SK-N-SH (cell line): ENCODE measurements at regions of chr2 and their contacts with region 1.

Region 1: GRCh38 chr2:237858294-237859081 is 935 bp upstream of the RAMP1 start:
- DNase-seq: peak; percentile 86
- H3K4me3 ChIP-seq: peak overlapping the region in 1 of 2 experiments; percentile 55; a peak in 1 of 4 replicates
- H3K27ac ChIP-seq: peak overlapping the region in 1 of 2 experiments; percentile 94; a peak in 2 of 4 replicates
- H3K4me1 ChIP-seq: peaks cover 0 to 38% of the 10 kb centered on the region in 2 experiments; a peak in 2 of 4 replicates
- H3K27me3 ChIP-seq: no peaks in the 10 kb centered on the region
- CTCF ChIP-seq: peak; percentile 81
- EP300 ChIP-seq: no peak
- RAD21 ChIP-seq: peak; percentile 99

Region 2: GRCh38 chr2:237704501-237705434 is 153.7 kb before region 1 on chr2:
- CTCF ChIA-PET with region 1: no interaction called
- POLR2A ChIA-PET with region 1: no interaction called
- DNase-seq: no peak
- H3K4me3 ChIP-seq: no peak overlapping the region
- H3K27ac ChIP-seq: peak overlapping the region; percentile 56 to 95
- H3K4me1 ChIP-seq: peaks cover 45 to 53% of the 10 kb centered on the region in 2 experiments
- H3K27me3 ChIP-seq: no peaks in the 10 kb centered on the region
- CTCF ChIP-seq: no peak
- EP300 ChIP-seq: peak in 1 of 2 experiments; percentile 44; a peak in 1 of 4 replicates
- RAD21 ChIP-seq: no peak

Region 3: GRCh38 chr2:237923481-237924163 is 65.1 kb after region 1 on chr2:
- CTCF ChIA-PET with region 1: interaction called, 71 read pairs
- POLR2A ChIA-PET with region 1: interaction called, 3 read pairs
- DNase-seq: peak; percentile 98
- H3K4me3 ChIP-seq: peak overlapping the region; percentile 24 to 52; a peak in 2 of 4 replicates
- H3K27ac ChIP-seq: peak overlapping the region in 1 of 2 experiments; percentile 94; a peak in 2 of 4 replicates
- H3K4me1 ChIP-seq: peaks cover 0 to 17% of the 10 kb centered on the region in 2 experiments; a peak in 2 of 4 replicates
- H3K27me3 ChIP-seq: no peaks in the 10 kb centered on the region
- CTCF ChIP-seq: peak; percentile 93
- EP300 ChIP-seq: peak in 1 of 2 experiments; percentile 34; a peak in 1 of 4 replicates
- RAD21 ChIP-seq: peak; percentile 75

Region 4: GRCh38 chr2:237978058-237978712 is 119.7 kb after region 1 on chr2:
- CTCF ChIA-PET with region 1: interaction called, 14 read pairs
- POLR2A ChIA-PET with region 1: no interaction called
- DNase-seq: peak; percentile 88
- H3K4me3 ChIP-seq: peak overlapping the region in 1 of 2 experiments; percentile 6; a peak in 1 of 4 replicates
- H3K27ac ChIP-seq: peak overlapping the region in 1 of 2 experiments; percentile 88; a peak in 2 of 4 replicates
- H3K4me1 ChIP-seq: peaks cover 0 to 51% of the 10 kb centered on the region in 2 experiments; a peak in 1 of 4 replicates
- H3K27me3 ChIP-seq: no peaks in the 10 kb centered on the region
- CTCF ChIP-seq: no peak
- EP300 ChIP-seq: peak in 1 of 2 experiments; percentile 4; a peak in 1 of 4 replicates
- RAD21 ChIP-seq: no peak

Region 5: DNA sequence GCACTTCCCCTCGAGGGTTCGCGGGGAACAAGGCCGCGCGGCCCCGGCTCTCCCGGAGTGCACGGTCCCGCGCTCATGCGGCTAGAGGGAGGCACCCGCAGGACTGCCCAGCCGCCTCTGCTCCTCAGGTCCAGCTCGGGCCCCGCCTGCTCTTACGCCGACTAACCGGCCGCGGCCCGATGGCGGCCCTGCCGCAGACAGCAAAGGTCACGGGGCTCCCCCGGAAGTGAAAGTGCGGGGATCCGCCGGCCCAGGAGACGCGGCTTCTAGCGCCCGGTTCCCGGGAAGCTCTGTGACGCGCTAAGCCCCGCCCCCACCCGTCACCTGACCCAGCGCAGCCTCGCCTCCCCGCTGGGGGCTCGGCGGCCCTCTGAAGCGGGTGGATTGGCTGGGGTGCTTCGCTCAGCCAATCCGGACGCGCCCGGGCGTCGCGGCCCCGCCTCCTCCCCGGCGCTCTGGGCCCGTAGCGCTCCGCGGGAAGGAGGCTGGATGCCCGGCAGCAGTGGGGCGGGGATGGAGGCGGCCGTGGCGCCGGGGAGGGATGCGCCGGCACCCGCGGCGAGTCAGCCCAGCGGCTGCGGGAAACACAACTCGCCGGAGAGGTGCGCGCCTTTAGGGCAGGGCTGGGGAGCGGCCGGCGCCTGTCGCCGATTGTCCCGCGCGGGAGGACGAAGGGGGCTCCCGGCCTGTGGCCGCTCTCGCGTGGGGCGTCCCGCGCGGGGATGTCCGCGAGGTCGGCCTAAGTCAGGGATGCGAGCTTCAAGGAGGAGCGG is 202.2 kb after region 1 on chr2 and contains the start of gene SCLY:
- CTCF ChIA-PET with region 1: interaction called, 10 read pairs
- POLR2A ChIA-PET with region 1: interaction called, 5 read pairs
- DNase-seq: peak; percentile 99
- H3K4me3 ChIP-seq: peak within 1 kb of the TSS; percentile 71 to 94
- H3K27ac ChIP-seq: peak within 1 kb of the TSS; percentile 79 to 91
- H3K4me1 ChIP-seq: peaks cover 5 to 13% of the 10 kb centered on the region in 2 experiments; a peak in 3 of 4 replicates
- H3K27me3 ChIP-seq: no peaks in the 10 kb centered on the region
- CTCF ChIP-seq: no peak
- EP300 ChIP-seq: no peak; a peak in 1 of 4 replicates
- RAD21 ChIP-seq: no peak
- polyA plus RNA-seq, gene SCLY: 19.1 and 20.9 TPM in 2 replicates

Region 6: DNA sequence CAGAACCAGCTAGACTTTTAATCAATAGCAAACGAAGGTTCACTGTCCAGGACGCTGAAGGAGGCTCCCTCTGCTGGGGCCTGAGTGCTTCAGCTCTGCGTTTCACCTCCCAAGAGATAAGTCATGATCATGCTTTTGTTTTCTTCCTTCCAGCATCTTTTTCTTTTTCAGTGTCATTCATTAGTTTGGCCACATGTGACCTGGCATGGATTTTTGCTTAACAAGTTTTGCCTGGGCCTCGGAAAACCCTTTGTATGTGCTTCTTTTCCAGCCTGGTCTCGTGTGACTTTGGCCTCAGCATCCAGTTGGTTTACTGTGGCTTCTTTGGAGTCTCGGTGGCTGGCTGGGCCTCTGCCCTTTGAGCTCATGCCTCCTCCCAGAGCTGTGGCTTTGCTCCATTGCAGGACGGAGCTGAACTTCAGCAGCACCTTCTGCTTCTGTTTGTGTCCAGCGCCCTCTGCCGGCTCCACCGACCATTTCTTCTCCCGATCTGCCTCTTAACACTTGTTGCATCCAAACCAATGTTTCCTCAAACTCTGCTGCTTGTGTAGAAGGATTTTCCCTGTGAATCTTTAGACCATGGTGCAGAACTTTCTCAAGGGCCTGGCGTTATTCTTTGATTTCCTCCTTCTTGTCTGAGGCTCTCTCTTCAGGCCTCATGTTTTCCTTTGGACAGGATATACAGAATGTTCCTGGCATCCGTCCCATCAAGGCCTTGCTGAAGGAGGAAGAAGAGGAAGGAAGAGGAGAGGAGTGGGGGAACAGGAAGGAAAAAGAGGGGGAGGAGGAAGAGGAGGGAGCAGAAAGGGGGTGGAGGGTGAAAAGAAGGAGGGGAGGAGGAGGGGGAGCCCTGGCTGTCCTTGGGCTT is 404.9 kb after region 1 on chr2:
- CTCF ChIA-PET with region 1: interaction called, 37 read pairs
- POLR2A ChIA-PET with region 1: no interaction called
- DNase-seq: peak; percentile 89
- H3K4me3 ChIP-seq: no peak overlapping the region; a peak in 1 of 4 replicates
- H3K27ac ChIP-seq: 0 out of 4 replicates have a peak overlapping the region, but pooled peaks of 1 of the 2 experiments have one; percentile 11
- H3K4me1 ChIP-seq: peaks cover 0 to 16% of the 10 kb centered on the region in 2 experiments; a peak in 1 of 4 replicates
- H3K27me3 ChIP-seq: no peaks in the 10 kb centered on the region
- CTCF ChIP-seq: peak; percentile 90
- EP300 ChIP-seq: no peak
- RAD21 ChIP-seq: peak; percentile 91